ENCODE measurements at regions of chr3 and their contacts with region 1.

Region 1: DNA sequence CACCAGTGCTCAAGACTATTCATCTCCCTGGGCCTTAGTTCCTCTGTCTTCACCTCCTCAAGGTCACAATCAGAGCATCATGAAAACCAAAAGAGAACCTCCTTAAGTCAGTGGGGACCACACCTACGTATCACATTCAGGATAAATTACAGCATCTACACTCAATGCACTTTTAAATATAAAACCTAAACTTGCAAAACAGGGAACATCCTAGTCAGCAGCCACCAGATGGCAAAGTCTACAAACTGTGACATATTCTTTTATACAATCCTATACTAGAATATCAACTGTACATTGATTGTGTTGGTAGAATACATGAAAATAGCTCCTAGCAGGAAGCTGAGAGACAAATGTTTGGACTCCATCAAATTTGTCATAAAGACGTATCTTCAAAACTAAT is 7.9 kb downstream of the KIF9 start:
- DNase-seq: no peak

Region 2: DNA sequence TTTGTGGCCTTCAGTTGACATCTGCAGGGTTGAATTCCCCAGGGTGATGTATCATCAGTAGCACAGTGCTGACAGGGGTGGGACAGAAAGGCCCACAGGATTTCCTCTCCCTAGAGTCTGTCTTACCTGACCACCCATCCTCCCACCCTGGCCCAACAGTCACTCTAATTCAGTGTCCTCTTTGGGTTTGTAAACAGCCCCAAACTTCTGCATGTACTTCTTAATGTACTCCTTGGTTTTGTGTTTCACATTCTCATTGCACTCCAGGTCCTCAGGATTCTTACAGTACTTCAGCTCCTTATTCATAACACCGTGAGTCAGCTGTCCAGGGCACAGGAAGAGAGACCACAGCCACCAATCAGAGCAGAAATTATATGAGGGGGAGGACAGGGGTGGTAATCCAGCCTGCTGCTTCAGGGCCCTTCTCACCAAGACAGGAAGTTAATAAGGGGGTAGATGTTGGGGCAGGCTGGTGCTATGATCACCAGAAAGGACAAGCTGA is 257.7 kb before region 1 on chr3:
- intact Hi-C with region 1: loop called (anchors 5 kb)
- DNase-seq: no peak

Region 3: GRCh38 chr3:47362701-47363100 is 88.0 kb after region 1 on chr3:
- intact Hi-C with region 1: no loop called
- DNase-seq: no peak

Region 4: GRCh38 chr3:47522082-47522987 is 247.7 kb after region 1 on chr3:
- intact Hi-C with region 1: no loop called
- DNase-seq: peak; percentile 61 to 97 (median 82)